Activated CD4-positive, alpha-beta T cell treated with anti-CD3 and anti-CD28 coated beads, Interleukin-2, amount 10 ng/mL, durations not matched to agents 24 days and 14 days (primary cell): ENCODE measurements at regions of chrX and their contacts with region 1.

Region 1: DNA sequence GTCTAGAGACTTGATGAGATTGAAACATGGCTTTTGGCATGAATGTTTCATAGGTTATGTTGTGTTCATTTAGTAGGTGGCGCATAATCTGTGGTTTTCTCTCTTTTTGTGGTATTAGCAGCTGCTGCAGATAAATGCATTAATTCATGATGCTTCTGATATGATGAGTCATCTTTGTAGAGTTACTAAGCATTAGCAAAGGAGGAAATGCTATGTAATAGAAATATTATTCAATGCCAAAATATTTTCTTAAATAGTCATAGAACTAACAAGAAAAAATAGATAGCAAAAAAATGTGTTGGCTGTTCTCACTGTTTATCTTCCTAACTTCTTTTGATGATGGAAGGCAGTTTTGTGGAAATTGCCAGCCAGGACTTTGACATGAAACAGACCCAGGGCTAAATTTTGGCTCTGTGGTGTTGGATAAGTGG is 3.6 kb downstream of the ZXDB start:
- DNase-seq: no peak
- H3K4me3 Mint-ChIP-seq: peak overlapping the region; percentile 74
- H3K27ac Mint-ChIP-seq: no peak overlapping the region
- H3K4me1 Mint-ChIP-seq: peaks cover 19% of the 10 kb centered on the region
- H3K27me3 Mint-ChIP-seq: no peaks in the 10 kb centered on the region

Region 2: GRCh38 chrX:57906790-57907189 is 311.4 kb after region 1 on chrX:
- intact Hi-C with region 1: loop called (anchors 5 kb)
- DNase-seq: no peak
- H3K4me3 Mint-ChIP-seq: peak overlapping the region; percentile 43
- H3K27ac Mint-ChIP-seq: peak overlapping the region; percentile 37
- H3K4me1 Mint-ChIP-seq: peaks cover 24% of the 10 kb centered on the region
- H3K27me3 Mint-ChIP-seq: no peaks in the 10 kb centered on the region